Right ventricle myocardium superior (tissue), 1 donor: ENCODE measurements at regions of chr22 and their contacts with region 1.

Region 1: DNA sequence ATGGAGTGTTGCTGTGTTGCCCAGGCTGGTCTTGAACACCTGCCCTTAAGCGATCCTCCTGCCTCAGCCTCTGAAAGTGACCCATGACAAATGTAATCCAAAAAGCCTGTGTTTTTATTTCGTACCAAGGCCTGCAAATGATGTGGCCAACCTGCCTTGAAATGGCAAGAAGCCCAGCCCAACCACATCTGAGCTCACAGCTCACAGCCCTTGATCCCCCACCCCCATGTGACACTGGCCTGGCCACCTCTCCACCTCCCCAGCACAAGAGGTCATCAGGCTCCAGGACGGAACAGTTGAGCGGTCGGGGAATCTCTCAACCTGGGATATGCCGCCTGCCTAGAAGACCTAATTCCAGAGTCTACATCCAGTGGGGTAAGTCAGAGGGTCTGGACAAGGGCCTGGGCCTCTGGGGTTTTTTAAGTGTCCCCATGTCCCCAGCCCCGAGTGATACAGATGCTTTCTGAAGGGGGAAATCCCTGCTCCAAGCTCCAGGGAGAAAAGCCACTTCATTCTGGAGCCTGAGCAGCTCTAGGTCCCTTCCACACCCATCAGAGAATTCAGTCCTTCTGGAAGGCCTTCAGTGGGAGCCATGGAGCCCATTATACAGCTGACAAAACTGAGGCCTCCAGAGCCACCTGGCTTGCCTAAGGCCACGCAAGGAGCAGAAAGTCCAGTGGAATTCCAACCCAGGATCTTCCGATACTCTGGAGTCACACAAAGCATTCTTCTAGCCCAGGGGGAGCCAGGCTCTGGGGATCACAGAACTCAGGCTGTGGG is 70.7 kb downstream of the MN1 start:
- DNase-seq: no peak
- ATAC-seq: no peak

Region 2: GRCh38 chr22:27786291-27786932 is 55.6 kb after region 1 on chr22:
- intact Hi-C with region 1: no loop called
- DNase-seq: peak; percentile 56
- ATAC-seq: no peak

Region 3: GRCh38 chr22:27799334-27800249 is 68.7 kb after region 1 on chr22:
- intact Hi-C with region 1: loop called (anchors 5 kb)
- DNase-seq: peak; percentile 59
- ATAC-seq: no peak